ENCODE measurements at regions of chr2 and their contacts with region 1.

Region 1: GRCh38 chr2:127637725-127638252 is 8.2 kb upstream of the GPR17 start:
- DNase-seq: no peak
- ATAC-seq: no peak
- H3K4me3 ChIP-seq: peak overlapping the region in 1 of 2 experiments; percentile 15
- H3K4me3 Mint-ChIP-seq: peak overlapping the region; percentile 43
- H3K27ac ChIP-seq: no peak overlapping the region
- H3K27ac Mint-ChIP-seq: peak overlapping the region; percentile 89
- H3K4me1 ChIP-seq: peaks cover 94% of the 10 kb centered on the region
- H3K4me1 Mint-ChIP-seq: peaks cover 71% of the 10 kb centered on the region
- H3K27me3 ChIP-seq: no peaks in the 10 kb centered on the region
- H3K27me3 Mint-ChIP-seq: no peaks in the 10 kb centered on the region
- CTCF ChIP-seq: no peak

Region 2: DNA sequence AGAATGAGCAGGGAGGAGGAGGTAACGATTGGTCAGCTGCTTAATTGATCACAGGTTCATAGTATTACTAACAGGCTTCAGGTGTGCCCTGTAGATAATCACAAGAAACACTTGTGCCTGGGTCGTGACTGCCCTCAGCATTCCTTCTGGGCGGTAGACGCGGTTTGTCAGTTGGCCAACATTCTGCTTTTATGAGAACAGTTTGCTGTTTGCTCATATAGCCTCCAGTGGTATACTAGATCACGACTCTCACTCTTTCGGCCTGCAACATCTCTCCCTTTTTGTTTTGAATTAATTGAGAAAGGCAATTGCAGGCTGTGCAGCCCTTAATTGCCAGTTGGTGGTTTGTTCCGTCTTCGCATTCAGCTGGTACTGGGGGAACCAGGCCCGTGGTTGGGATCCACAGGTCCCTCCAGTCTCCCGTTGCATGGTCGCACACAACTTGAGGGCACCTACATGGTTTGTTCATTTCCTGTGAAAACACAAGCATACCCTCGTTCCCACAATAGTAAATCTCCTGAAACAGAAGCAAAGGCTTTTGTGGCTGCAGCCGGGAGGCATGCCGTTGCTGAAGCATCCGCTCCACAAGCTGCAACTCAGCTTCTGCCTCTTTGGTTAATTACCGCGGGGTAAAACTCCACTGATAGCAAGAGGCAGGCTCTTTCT is 22.2 kb before region 1 on chr2:
- CTCF ChIA-PET with region 1: interaction called, 4 read pairs
- POLR2A ChIA-PET with region 1: no interaction called
- intact Hi-C with region 1: loop called in 1 of 2 experiments (anchors 2 kb)
- DNase-seq: peak in 1 of 9 experiments; percentile 49
- ATAC-seq: no peak
- H3K4me3 ChIP-seq: no peak overlapping the region
- H3K4me3 Mint-ChIP-seq: peak overlapping the region; percentile 10
- H3K27ac ChIP-seq: no peak overlapping the region
- H3K27ac Mint-ChIP-seq: peak overlapping the region; percentile 42
- H3K4me1 ChIP-seq: peaks cover 10% of the 10 kb centered on the region
- H3K4me1 Mint-ChIP-seq: peaks cover 26% of the 10 kb centered on the region
- H3K27me3 ChIP-seq: no peaks in the 10 kb centered on the region
- H3K27me3 Mint-ChIP-seq: no peaks in the 10 kb centered on the region
- CTCF ChIP-seq: no peak

Region 3: GRCh38 chr2:127695491-127696472 is 58.0 kb after region 1 on chr2:
- CTCF ChIA-PET with region 1: no interaction called
- POLR2A ChIA-PET with region 1: interaction called, 20 read pairs
- intact Hi-C with region 1: loop called (anchors 2 kb)
- DNase-seq: peak in 6 of 9 experiments; percentile 36 to 75 (median 60)
- ATAC-seq: peak; percentile 96
- H3K4me3 ChIP-seq: no peak overlapping the region
- H3K4me3 Mint-ChIP-seq: peak overlapping the region; percentile 50
- H3K27ac ChIP-seq: no peak overlapping the region
- H3K27ac Mint-ChIP-seq: no peak overlapping the region
- H3K4me1 ChIP-seq: peaks cover 6% of the 10 kb centered on the region
- H3K4me1 Mint-ChIP-seq: peaks cover 7% of the 10 kb centered on the region
- H3K27me3 ChIP-seq: no peaks in the 10 kb centered on the region
- H3K27me3 Mint-ChIP-seq: no peaks in the 10 kb centered on the region
- CTCF ChIP-seq: peak; percentile 68